Activated T-helper 2 cell treated with anti-CD3 and anti-CD28 coated beads, Interferon-gamma antibody, Interleukin-2, Interleukin-4, amounts not matched to agents 10 μg/mL and 5 μg/mL and 100 μg/mL, durations not matched to agents 14 hours and 24 hours and 36 hours (primary cell): ENCODE measurements at regions of chr7 and their contacts with region 1.

Region 1: DNA sequence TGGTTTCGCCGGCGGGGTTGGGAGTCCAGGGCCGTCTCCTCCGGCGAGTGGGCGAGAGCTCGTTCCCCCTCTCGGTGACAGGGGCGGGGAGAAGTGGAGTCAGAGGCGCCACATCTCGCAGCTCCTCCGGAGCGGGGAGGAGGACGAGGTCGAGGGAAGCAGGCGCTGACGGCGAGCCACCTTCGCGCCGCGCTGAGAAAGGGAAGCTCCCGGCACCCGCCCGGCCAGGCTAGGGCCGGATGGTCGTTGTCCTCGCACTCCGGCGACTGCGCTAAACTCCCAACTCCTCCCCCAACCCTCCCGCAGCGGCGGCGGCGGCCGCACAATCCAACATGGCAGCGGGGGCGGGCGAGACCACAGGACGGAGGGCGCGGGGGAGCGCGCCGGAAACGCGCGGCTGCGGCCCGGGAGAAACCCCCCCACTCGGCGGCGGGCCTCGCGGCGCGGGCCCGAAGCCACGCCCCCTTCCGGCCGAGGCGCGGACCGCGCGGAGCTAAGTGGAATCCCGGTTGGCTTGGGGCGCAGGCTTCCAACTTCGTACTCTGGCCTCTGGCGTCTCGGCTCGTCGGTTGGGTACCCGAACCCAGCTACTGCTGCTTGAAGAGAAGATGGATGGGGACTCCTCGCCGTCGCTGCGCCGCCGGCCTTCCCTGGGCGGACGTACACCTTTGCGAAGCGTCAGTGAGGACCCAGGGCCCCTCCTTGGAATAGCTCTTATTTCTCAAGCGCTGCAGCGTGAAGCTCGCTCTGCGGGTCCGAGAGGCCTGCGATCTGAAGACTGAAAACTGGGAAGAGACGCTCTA is at the start of gene WASL:
- DNase-seq: peak; percentile 85
- H3K4me3 Mint-ChIP-seq: peak within 1 kb of the TSS; percentile 97
- H3K27ac Mint-ChIP-seq: peak within 1 kb of the TSS; percentile 95
- H3K4me1 Mint-ChIP-seq: peaks cover 49% of the 10 kb centered on the region
- H3K27me3 Mint-ChIP-seq: peaks cover 11% of the 10 kb centered on the region
- total RNA-seq, gene WASL: 6.0 and 6.6 TPM in 2 replicates

Region 2: GRCh38 chr7:123534383-123535260 is 214.3 kb before region 1 on chr7 and contains the start of gene IQUB:
- intact Hi-C with region 1: loop called (anchors 5 kb)
- DNase-seq: peak; percentile 88
- H3K4me3 Mint-ChIP-seq: peak within 1 kb of the TSS; percentile 88
- H3K27ac Mint-ChIP-seq: peak within 1 kb of the TSS; percentile 84
- H3K4me1 Mint-ChIP-seq: peaks cover 23% of the 10 kb centered on the region
- H3K27me3 Mint-ChIP-seq: peaks cover 17% of the 10 kb centered on the region
- total RNA-seq, gene IQUB: 0.25 TPM in 1 of 2 replicates, not detected in the other

Region 3: DNA sequence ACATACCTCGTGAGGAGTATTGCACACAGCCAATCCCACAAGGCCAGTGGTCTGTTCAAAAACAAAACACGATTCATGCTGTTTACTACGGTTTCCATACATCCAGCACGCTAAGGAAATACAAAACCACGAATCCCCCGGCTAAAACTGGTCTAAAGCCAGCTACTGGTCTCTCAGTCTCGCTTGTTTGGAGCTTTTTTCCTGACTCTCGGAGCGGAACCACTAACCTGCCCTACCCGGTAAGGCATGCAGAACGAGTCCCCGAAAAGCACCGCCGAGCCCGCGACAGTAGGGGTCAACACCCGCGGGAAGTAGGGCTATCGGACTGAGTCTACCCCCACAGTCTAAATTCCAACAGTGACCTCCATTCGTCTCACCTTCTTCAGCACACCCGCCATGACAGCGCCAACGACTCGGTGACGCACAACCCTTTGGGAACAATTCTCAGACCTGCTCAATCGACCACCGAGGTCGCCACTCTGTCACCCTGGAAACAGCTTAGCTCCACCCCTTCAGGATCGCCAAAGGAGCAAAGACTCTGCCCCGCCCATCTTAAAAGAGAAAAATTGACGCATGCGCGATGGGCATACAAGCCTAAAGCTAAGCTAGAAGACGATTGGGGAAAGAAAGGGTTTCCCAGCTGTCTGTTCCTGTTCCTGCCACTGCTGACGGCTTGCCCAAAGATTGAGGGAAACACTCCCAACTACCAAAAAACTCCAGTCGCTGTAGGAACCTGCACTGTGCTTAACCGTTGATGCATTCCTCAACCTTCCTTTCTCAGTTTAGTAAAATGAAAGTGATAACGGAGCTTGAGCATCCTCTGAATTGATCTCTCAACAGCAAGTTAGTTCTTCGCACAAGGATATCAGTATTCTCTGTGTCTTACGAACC is 191.3 kb before region 1 on chr7 and contains the start of gene NDUFA5:
- intact Hi-C with region 1: loop called (anchors 2 kb)
- DNase-seq: peak; percentile 95
- H3K4me3 Mint-ChIP-seq: no peak within 1 kb of the TSS
- H3K27ac Mint-ChIP-seq: no peak within 1 kb of the TSS
- H3K4me1 Mint-ChIP-seq: peaks cover 4% of the 10 kb centered on the region
- H3K27me3 Mint-ChIP-seq: peaks cover 2% of the 10 kb centered on the region
- total RNA-seq, gene NDUFA5: 55.1 and 57.2 TPM in 2 replicates

Region 4: DNA sequence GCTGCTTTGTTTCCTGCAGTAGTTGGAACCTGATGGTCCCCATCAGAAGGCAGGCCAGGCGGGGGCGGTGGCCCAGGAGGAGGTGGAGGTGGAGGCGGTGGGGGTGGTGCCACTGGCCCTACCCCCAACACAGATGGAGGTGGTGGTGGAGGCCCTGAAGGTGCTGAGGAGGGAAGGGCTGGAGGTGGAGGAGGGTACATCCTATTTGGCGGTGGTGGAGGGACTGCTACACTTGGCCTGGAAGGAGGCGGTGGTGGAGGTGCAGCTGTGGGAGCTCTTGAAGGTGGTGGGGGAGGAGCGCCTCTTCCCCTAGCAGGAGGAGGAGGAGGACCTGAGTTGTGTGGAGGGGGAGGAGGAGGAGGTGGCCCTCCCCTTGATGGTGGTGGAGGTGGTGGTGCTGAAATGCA is 56.5 kb before region 1 on chr7:
- intact Hi-C with region 1: loop called (anchors 10 kb)
- DNase-seq: no peak
- H3K4me3 Mint-ChIP-seq: no peak overlapping the region
- H3K27ac Mint-ChIP-seq: no peak overlapping the region
- H3K4me1 Mint-ChIP-seq: no peaks in the 10 kb centered on the region
- H3K27me3 Mint-ChIP-seq: no peaks in the 10 kb centered on the region

Region 5: GRCh38 chr7:123712619-123713018 is 36.3 kb before region 1 on chr7:
- intact Hi-C with region 1: loop called (anchors 1 kb)
- DNase-seq: no peak
- H3K4me3 Mint-ChIP-seq: no peak overlapping the region
- H3K27ac Mint-ChIP-seq: no peak overlapping the region
- H3K4me1 Mint-ChIP-seq: peaks cover 51% of the 10 kb centered on the region
- H3K27me3 Mint-ChIP-seq: no peaks in the 10 kb centered on the region

Region 6: GRCh38 chr7:123770378-123770777 is 21.4 kb after region 1 on chr7:
- intact Hi-C with region 1: loop called (anchors 1 kb)
- DNase-seq: no peak
- H3K4me3 Mint-ChIP-seq: no peak overlapping the region
- H3K27ac Mint-ChIP-seq: no peak overlapping the region
- H3K4me1 Mint-ChIP-seq: peaks cover 8% of the 10 kb centered on the region
- H3K27me3 Mint-ChIP-seq: peaks cover 13% of the 10 kb centered on the region

Region 7: DNA sequence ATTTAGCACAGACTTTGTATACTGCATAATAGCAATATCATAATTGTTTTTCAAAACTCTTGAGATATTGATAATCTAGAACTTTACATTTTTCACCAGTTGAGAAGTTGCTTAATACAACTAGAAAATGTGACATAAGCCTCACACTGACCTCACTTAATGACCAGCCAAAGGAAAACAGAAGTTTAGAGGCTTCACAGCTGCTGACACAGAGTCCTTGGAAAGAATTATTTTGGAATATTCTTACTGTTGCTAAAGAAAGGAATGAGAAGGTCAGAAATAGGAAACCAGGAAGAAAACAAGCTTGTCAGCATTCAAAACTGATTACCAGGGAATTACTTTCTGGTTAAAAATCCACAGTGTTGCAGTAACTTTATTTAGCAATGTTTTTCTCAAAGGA is 35.3 kb after region 1 on chr7:
- intact Hi-C with region 1: no loop called
- DNase-seq: no peak
- H3K4me3 Mint-ChIP-seq: no peak overlapping the region
- H3K27ac Mint-ChIP-seq: no peak overlapping the region
- H3K4me1 Mint-ChIP-seq: no peaks in the 10 kb centered on the region
- H3K27me3 Mint-ChIP-seq: peaks cover 4% of the 10 kb centered on the region

Region 8: GRCh38 chr7:123823898-123824753 is 75.2 kb after region 1 on chr7:
- intact Hi-C with region 1: loop called (anchors 1 kb)
- DNase-seq: no peak
- H3K4me3 Mint-ChIP-seq: peak overlapping the region; percentile 6
- H3K27ac Mint-ChIP-seq: peak overlapping the region; percentile 67
- H3K4me1 Mint-ChIP-seq: peaks cover 16% of the 10 kb centered on the region
- H3K27me3 Mint-ChIP-seq: peaks cover 16% of the 10 kb centered on the region